IMR-90 (cell line): ENCODE measurements at regions of chr15 and their contacts with region 1.

Region 1: GRCh38 chr15:67433495-67434099 is 87.3 kb upstream of the C15orf61 start:
- DNase-seq: peak; percentile 59
- ATAC-seq: peak; percentile 99
- H3K4me3 ChIP-seq: no peak overlapping the region
- H3K27ac ChIP-seq: no peak overlapping the region
- H3K4me1 ChIP-seq: no peaks in the 10 kb centered on the region
- H3K27me3 ChIP-seq: no peaks in the 10 kb centered on the region
- CTCF ChIP-seq: peak; percentile 77
- POLR2A ChIP-seq: no peak
- RAD21 ChIP-seq: peak; percentile 79

Region 2: DNA sequence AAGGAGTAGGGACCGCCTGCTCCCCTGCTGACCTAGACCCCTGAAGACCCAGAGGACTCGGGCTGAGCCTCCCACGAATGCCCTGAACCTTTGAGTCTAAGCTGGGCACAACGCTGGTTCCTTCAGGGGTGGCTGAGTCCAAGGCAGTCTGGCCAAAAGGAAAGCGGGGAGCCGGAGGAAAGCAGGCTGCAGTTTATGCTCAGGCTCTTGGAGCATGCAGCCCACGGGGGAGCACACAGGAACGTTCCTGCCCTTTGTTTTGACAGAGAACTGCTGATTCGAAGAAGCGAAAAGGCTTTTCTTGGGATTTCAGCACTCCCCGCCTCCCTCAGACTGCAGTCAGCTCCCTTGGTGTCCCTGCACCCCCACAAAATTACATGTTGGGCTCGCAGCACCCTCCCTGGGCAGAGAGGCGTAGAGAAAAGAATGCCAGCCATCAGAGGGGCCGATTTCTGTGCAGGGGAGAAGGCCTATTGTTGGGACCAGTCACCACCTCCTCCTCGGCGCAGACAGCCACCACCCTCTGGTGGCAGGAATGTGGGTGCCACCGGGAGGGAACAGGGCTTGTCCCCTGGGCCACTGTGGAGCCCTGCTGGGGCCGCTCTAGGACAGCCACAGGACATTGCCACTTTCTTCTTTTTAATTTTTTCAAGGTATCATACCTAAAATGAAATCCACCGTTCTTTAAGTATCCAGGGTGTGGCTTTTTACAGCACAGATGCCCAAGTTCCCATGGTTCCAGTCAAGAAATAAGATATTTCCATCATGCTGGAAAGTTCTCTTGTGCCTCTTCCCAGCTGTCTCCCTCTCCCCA is 659.4 kb before region 1 on chr15:
- CTCF ChIA-PET with region 1: no interaction called
- POLR2A ChIA-PET with region 1: no interaction called
- dilution Hi-C with region 1: no loop called
- in situ Hi-C with region 1: no loop called
- intact Hi-C with region 1: no loop called
- DNase-seq: peak; percentile 64
- ATAC-seq: peak; percentile 79
- H3K4me3 ChIP-seq: no peak overlapping the region
- H3K27ac ChIP-seq: peak overlapping the region; percentile 61
- H3K4me1 ChIP-seq: peaks cover 49% of the 10 kb centered on the region
- H3K27me3 ChIP-seq: no peaks in the 10 kb centered on the region
- CTCF ChIP-seq: peak; percentile 98
- POLR2A ChIP-seq: no peak
- RAD21 ChIP-seq: peak; percentile 90

Region 3: GRCh38 chr15:66951531-66952320 is 481.9 kb before region 1 on chr15:
- CTCF ChIA-PET with region 1: interaction called, 7 read pairs
- POLR2A ChIA-PET with region 1: no interaction called
- dilution Hi-C with region 1: no loop called
- in situ Hi-C with region 1: loop called (anchors 5 kb)
- intact Hi-C with region 1: loop called (anchors 1 kb)
- DNase-seq: peak; percentile 42
- ATAC-seq: no peak
- H3K4me3 ChIP-seq: no peak overlapping the region
- H3K27ac ChIP-seq: no peak overlapping the region
- H3K4me1 ChIP-seq: peaks cover 3% of the 10 kb centered on the region
- H3K27me3 ChIP-seq: no peaks in the 10 kb centered on the region
- CTCF ChIP-seq: no peak
- POLR2A ChIP-seq: no peak
- RAD21 ChIP-seq: no peak

Region 4: GRCh38 chr15:67196672-67197363 is 236.8 kb before region 1 on chr15:
- CTCF ChIA-PET with region 1: no interaction called
- POLR2A ChIA-PET with region 1: no interaction called
- dilution Hi-C with region 1: no loop called
- in situ Hi-C with region 1: no loop called
- intact Hi-C with region 1: loop called (anchors 5 kb)
- DNase-seq: peak; percentile 93
- ATAC-seq: peak; percentile 44
- H3K4me3 ChIP-seq: no peak overlapping the region
- H3K27ac ChIP-seq: peak overlapping the region; percentile 72
- H3K4me1 ChIP-seq: peaks cover 41% of the 10 kb centered on the region
- H3K27me3 ChIP-seq: no peaks in the 10 kb centered on the region
- CTCF ChIP-seq: no peak
- POLR2A ChIP-seq: peak; percentile 56; the same call in 1 of the 2 replicates
- RAD21 ChIP-seq: no peak